Common myeloid progenitor, CD34-positive (primary cell): ENCODE measurements at regions of chr20 and their contacts with region 1.

Region 1: DNA sequence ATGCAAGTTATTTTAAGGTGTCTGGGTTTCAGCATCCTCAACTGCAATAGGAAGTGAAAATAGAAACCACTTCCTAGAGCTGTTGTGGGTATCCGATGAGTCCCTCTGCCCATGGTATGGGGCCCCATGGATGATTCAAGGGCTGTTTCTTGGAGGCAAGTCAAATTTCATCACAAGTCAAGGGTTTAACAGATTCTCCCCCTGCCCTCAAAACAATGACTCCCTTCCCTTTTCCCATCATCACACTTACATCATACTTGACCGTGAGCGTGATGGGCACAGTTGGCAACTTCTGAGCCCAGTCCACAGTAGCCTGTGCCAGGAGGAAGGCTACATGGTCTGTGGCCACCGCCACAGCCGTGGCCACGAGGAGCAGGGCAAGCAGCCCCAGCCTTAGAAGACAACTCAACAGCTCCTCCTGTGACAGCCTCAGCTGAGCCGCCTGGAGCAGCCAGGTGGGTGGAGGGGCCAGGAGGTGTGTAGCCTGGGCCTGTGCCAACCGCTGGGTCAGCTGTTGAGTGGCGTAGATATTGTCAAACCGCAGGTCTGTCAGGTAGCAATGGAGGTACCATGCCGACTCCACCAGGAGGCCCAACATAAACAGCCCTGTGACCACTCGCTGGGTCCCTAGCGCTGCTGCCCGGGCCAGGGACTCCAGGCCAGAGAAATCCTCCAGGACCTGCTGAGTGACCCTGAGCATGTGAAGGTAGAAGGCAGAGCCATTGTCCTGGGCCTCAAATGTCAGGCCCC is 5.2 kb downstream of the OCSTAMP start:
- DNase-seq: peak; percentile 71 to 90 (median 90)
- H3K4me3 ChIP-seq: peak overlapping the region in 1 of 7 experiments; percentile 32
- H3K27ac ChIP-seq: no peak overlapping the region
- H3K4me1 ChIP-seq: peaks cover 6 to 36% (median 33%) of the 10 kb centered on the region in 4 experiments
- H3K27me3 ChIP-seq: peaks cover 0 to 10% (median 0%) of the 10 kb centered on the region in 5 experiments

Region 2: DNA sequence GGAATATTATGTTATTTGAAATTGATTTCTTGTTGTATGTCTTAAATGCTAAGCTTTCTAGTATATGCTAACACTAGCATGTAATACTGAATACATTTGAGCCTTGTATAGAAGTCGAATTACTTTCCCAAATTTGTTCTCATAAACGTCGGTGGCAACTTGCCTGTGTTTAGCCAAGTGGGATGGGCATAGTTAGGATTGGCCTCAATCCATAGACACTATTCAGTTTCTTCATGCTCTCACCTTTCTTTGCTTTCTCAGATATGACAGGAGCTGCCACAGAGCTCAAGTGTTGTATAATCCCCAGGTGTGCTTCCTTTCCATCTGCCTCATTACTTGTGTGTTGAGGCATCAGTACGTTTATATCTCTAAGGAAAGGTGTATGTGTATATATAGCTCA is 51.2 kb before region 1 on chr20:
- CTCF ChIA-PET with region 1: no interaction called
- POLR2A ChIA-PET with region 1: no interaction called
- DNase-seq: no peak
- H3K4me3 ChIP-seq: no peak overlapping the region
- H3K27ac ChIP-seq: no peak overlapping the region
- H3K4me1 ChIP-seq: no peaks in the 10 kb centered on the region
- H3K27me3 ChIP-seq: no peaks in the 10 kb centered on the region

Region 3: DNA sequence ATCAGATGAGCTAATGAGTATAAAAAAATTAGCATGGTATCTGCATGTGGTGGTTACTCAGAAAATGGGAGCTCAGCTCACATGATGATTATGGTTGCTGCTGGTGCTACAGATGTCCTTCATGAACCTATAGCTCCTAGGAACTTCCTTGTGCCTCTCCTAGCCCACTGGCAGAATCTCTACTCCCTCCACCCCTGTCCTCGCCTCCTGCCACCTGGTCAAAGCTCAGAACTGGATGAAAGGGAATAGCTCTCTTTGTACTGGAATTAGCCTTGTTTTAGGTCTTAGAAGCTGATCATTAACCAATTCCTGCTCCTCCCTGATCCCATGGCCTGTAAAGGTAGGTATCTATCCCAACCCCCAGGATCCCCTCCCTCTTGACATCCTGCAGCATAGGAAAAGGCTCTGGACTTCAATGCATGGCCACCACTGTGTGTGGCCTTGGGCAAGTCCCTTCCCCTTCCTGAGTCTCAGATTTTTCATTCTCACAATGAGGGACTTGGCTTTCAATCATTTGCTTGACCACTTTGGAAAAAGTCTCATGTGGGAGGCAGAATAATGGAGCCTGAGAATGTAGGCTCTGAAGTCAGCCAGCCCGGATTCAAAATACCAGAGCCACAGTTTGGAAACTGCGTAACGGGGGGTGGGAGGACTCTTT is 62.1 kb after region 1 on chr20:
- CTCF ChIA-PET with region 1: no interaction called
- POLR2A ChIA-PET with region 1: no interaction called
- DNase-seq: no peak
- H3K4me3 ChIP-seq: no peak overlapping the region
- H3K27ac ChIP-seq: no peak overlapping the region
- H3K4me1 ChIP-seq: no peaks in the 10 kb centered on the region
- H3K27me3 ChIP-seq: no peaks in the 10 kb centered on the region

Region 4: DNA sequence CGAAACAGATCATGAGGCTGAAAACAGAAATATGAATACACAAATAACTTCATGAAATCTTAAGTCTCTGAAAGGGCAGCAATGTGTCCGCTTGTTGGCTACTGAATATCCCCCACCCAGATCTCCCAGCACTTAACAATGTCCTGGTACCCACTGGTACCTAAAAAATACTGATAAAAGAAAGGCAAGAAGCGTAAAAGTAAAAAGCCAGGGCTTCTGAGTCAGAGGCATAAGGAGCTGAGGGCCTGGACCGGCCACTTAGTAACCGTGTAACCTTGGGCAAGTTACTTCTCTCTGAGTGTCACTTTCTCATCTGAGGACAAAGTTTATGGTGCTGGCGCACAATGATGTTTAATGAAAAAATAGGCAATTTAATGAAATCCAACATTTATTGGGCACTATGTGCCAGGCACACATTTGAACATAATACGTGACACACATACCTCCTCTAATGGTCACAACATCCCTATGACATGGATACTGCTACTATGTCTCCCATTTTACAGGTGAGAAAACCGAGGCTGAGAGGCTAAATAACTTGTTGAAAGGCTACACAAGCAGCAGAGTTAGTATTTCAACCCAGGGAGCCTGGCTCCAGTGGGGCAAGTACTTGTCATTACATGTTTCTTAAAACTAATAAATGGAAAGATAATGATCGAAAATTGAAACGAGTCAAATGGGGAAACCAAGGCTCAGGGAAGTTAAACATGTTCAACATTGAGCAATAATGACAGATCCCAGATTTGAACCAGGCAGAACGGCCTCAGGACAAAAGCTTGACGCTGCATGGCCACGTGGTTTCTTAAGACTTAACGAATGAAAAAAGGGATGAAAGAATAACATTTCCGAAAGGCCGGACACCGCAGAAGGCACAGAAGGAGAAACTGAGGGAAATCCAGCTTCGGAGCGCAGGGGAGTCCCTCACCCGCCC is 143.2 kb after region 1 on chr20:
- CTCF ChIA-PET with region 1: interaction called, 11 read pairs
- POLR2A ChIA-PET with region 1: no interaction called
- DNase-seq: peak in 1 of 3 donors; percentile 24
- H3K4me3 ChIP-seq: peak overlapping the region; percentile 72 to 96 (median 89)
- H3K27ac ChIP-seq: peak overlapping the region; percentile 82 to 91
- H3K4me1 ChIP-seq: peaks cover 12 to 40% (median 29%) of the 10 kb centered on the region in 4 experiments
- H3K27me3 ChIP-seq: no peaks in the 10 kb centered on the region